ENCODE measurements at regions of chr22 and their contacts with region 1.

Region 1: GRCh38 chr22:39514373-39514973 is 5.9 kb upstream of the ATF4 start:
- DNase-seq: peak; percentile 73
- ATAC-seq: no peak; the same call in 1 of the 2 replicates
- H3K4me3 Mint-ChIP-seq: no peak overlapping the region
- H3K27ac Mint-ChIP-seq: no peak overlapping the region
- H3K4me1 Mint-ChIP-seq: peaks cover 8% of the 10 kb centered on the region
- H3K27me3 Mint-ChIP-seq: peaks cover 83% of the 10 kb centered on the region
- CTCF ChIP-seq: peak; percentile 66

Region 2: GRCh38 chr22:39183991-39184585 is 330.4 kb before region 1 on chr22:
- CTCF ChIA-PET with region 1: no interaction called
- POLR2A ChIA-PET with region 1: no interaction called
- DNase-seq: no peak
- ATAC-seq: peak; percentile 61
- H3K4me3 Mint-ChIP-seq: no peak overlapping the region
- H3K27ac Mint-ChIP-seq: no peak overlapping the region
- H3K4me1 Mint-ChIP-seq: peaks cover 28% of the 10 kb centered on the region
- H3K27me3 Mint-ChIP-seq: no peaks in the 10 kb centered on the region; the same call in none of the 2 replicates
- CTCF ChIP-seq: no peak

Region 3: DNA sequence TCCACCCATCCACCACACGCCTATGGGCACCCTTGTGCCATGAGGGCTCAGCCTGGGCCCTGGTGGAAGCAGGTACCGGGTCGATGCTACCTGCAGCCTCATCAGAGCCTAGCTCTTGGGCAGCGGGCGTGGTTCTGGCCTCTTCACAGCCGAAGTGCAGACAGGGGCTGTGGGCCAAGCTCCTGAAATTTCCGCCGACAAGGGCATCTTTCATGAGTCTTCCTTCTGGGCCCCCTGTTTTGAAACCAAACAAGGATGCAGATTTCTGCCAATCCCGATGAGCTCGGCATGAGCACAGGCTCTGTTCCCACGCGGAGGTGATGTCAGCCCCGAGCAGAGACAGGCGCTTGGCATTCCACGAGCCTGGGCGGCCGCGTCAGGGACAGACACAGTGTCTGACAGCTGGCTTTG is 80.2 kb before region 1 on chr22:
- CTCF ChIA-PET with region 1: interaction called, 10 read pairs
- POLR2A ChIA-PET with region 1: no interaction called
- DNase-seq: no peak
- ATAC-seq: no peak
- H3K4me3 Mint-ChIP-seq: no peak overlapping the region
- H3K27ac Mint-ChIP-seq: no peak overlapping the region
- H3K4me1 Mint-ChIP-seq: peaks cover 22% of the 10 kb centered on the region
- H3K27me3 Mint-ChIP-seq: no peaks in the 10 kb centered on the region
- CTCF ChIP-seq: no peak

Region 4: DNA sequence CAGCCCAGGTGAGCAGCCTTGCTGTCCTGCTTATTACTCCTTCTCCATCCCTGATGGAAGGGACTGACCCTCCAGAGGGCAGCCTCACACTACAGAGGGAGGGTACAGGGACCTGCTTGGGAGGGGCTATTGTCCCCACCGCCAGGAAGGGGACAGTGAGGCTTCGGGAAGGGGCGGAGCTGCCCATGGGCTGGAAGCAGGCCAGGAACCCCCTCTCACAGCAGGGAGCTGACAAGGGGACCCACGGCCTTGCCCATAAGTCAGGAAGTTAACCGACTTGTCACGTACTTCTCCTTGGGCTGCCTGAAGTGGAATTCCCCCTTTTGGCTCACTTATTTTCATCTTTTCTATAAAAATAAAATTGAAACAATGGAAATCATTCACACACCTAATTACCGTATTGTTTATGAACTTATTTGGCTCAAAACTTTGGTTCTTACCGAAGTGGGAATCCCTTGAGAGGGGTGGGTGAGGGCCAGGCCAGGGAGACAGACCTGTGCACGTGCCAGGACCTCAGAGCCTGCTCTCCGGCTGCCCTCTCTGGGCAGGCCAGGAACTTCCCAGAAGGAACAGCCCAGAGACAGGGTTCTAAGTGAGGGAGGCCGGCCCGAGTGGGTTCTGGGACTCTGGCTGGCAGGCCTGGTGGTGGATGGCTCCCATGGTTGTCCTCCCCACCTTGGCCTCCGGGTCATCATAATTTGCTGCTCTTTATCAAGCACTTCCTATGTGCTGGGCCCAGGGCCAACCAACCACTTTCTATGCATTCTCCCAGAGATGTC is 51.8 kb before region 1 on chr22:
- CTCF ChIA-PET with region 1: interaction called, 12 read pairs
- POLR2A ChIA-PET with region 1: interaction called, 3 read pairs
- DNase-seq: peak; percentile 62
- ATAC-seq: peak; percentile 81
- H3K4me3 Mint-ChIP-seq: no peak overlapping the region
- H3K27ac Mint-ChIP-seq: 0 out of 2 replicates have a peak overlapping the region, but pooled peaks have one; percentile 12
- H3K4me1 Mint-ChIP-seq: peaks cover 11% of the 10 kb centered on the region
- H3K27me3 Mint-ChIP-seq: peaks cover 21% of the 10 kb centered on the region
- CTCF ChIP-seq: no peak

Region 5: DNA sequence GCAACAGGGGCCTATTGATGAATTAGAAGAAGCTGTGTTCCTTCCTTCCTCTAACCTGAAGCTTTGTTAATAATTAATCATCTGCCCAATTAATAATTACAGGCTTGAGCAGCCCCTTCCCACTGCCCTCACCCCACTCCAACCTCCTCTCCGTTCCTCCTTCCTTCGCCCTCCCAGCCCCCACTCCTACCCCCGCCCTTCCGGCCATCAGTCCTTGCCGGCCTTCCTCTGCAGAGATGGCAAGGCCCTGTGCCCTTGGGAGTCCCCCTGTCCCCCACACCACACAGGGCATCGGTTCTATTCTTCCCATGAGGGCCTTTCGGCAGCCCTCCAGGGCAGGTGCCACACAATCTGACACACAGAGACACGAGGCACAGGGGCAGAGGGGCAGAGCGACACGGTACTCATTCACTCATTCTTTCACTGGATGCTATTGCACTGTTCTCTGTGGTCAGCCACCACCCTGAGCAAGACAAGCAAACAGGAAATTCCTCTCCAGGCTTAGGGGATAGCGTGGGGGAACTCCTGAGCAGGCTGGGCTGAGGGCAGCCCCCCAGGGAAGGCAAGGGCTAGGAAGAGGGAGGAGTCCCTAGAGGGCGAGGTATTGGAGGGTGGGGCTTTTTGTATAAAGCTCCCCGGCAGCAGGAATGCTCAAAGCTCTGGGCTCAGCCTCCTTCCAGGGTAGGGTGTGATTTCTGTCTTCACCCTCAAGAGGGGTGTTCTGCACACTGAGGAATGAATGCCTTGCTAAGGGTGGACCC is 42.9 kb before region 1 on chr22:
- CTCF ChIA-PET with region 1: interaction called, 17 read pairs
- POLR2A ChIA-PET with region 1: interaction called, 3 read pairs
- DNase-seq: no peak
- ATAC-seq: peak; percentile 14
- H3K4me3 Mint-ChIP-seq: no peak overlapping the region
- H3K27ac Mint-ChIP-seq: peak overlapping the region; percentile 85
- H3K4me1 Mint-ChIP-seq: peaks cover 68% of the 10 kb centered on the region
- H3K27me3 Mint-ChIP-seq: no peaks in the 10 kb centered on the region
- CTCF ChIP-seq: no peak

Region 6: GRCh38 chr22:39478441-39479264 is 35.8 kb before region 1 on chr22:
- CTCF ChIA-PET with region 1: interaction called, 12 read pairs
- POLR2A ChIA-PET with region 1: no interaction called
- DNase-seq: peak; percentile 70
- ATAC-seq: peak; percentile 39
- H3K4me3 Mint-ChIP-seq: no peak overlapping the region
- H3K27ac Mint-ChIP-seq: no peak overlapping the region
- H3K4me1 Mint-ChIP-seq: peaks cover 23% of the 10 kb centered on the region
- H3K27me3 Mint-ChIP-seq: no peaks in the 10 kb centered on the region
- CTCF ChIP-seq: no peak

Region 7: DNA sequence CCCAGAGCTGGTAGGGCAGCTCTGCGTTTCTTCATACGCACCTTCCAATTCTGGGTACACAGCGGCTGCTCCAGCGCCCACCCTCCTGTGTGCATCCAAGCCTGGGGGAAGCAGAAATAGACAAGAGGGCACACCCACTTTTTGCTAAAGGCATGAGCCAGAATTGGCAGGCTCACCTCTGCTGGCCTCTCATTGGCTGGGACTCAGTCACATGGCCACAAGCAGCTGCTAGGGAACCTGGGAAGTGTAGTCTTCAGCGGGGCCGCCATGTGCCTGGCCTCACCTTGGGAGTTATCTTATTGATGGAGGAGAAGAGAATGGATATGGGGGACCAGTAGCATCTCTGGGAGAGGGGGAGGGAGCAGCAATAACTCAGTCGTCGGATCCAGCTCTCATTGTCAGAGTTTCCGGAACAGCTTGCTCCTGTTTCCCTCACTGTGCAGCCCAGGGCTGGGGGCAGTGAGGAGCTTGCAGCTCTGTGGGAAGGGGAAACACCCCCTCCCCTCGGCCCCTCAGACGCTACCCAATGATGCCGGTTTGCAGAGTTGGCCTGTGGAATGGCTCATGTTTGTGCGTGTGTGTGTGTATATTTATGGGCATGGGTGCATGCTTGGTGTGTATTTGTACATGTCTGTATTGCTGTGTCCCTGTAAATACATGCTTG is 24.2 kb before region 1 on chr22:
- CTCF ChIA-PET with region 1: interaction called, 10 read pairs
- POLR2A ChIA-PET with region 1: interaction called, 7 read pairs
- DNase-seq: peak; percentile 84
- ATAC-seq: peak; percentile 96
- H3K4me3 Mint-ChIP-seq: peak overlapping the region; percentile 38
- H3K27ac Mint-ChIP-seq: no peak overlapping the region
- H3K4me1 Mint-ChIP-seq: peaks cover 8% of the 10 kb centered on the region
- H3K27me3 Mint-ChIP-seq: peaks cover 17% of the 10 kb centered on the region
- CTCF ChIP-seq: no peak

Region 8: GRCh38 chr22:39502109-39502788 is 12.2 kb before region 1 on chr22 and contains the start of gene MIEF1:
- CTCF ChIA-PET with region 1: interaction called, 41 read pairs
- POLR2A ChIA-PET with region 1: interaction called, 16 read pairs
- DNase-seq: peak; percentile 96
- ATAC-seq: peak; percentile 97
- H3K4me3 Mint-ChIP-seq: peak within 1 kb of the TSS; percentile 97
- H3K27ac Mint-ChIP-seq: peak within 1 kb of the TSS; percentile 97
- H3K4me1 Mint-ChIP-seq: peaks cover 13% of the 10 kb centered on the region
- H3K27me3 Mint-ChIP-seq: peaks cover 89% of the 10 kb centered on the region
- CTCF ChIP-seq: no peak
- total RNA-seq, gene MIEF1: 31.5 to 38.7 TPM (median 31.9 TPM) in 3 replicates

Measured in WTC11 (cell line).